ENCODE measurements at regions of chr12 and their contacts with region 1.

Region 1: DNA sequence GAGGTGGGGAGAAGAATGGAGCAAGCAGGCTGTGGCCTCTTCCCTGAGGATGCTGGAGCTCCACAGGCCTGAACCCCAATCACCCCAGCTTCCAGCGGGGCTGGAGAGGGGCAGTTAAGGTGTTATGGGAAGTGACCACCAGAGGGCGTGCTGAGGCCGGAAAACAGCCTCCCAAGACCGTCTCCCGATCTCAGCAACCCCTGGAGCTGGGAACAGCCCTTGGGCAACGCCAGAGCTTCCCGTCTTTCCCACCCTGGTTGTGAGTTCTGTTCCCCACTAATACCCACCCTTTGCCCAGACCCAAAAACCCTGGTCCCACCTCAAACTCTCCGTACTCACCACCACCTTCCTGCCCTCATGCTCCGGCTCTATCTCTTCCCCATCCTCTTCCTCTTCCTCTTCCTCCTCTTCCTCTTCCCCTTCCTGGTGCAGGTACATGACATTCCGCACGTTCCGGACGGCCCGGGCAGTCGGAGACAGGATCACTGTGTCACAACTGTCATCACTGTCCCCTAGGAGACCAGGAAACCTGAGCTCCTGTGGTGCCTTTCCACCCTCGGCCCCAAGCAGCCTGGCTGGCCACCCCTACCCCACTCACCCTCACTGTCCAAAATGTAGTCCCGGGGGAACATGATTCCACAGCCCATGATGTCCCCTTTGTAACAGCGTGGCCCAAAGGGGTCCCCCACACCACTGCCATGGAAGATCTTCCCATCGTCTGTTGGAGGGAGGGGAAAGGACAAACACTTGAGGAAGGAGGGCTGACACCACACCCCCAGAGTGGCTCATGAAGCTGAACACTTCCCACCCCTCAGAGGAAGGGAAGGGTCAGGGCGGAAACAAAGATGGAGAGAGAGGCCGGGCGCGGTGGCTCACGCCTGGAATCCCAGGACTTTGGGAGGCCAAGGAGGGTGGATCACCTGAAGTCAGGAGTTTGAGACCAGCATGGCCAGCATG is 12.9 kb downstream of the SPRYD3 start:
- DNase-seq: no peak
- H3K4me3 ChIP-seq: no peak overlapping the region
- H3K27ac ChIP-seq: peak overlapping the region; percentile 39
- H3K27me3 ChIP-seq: no peaks in the 10 kb centered on the region
- CTCF ChIP-seq: peak; percentile 88

Region 2: GRCh38 chr12:52681526-52682380 is 384.5 kb before region 1 on chr12:
- CTCF ChIA-PET with region 1: no interaction called
- POLR2A ChIA-PET with region 1: no interaction called
- DNase-seq: no peak
- H3K4me3 ChIP-seq: no peak overlapping the region
- H3K27ac ChIP-seq: no peak overlapping the region
- H3K27me3 ChIP-seq: peaks cover 13% of the 10 kb centered on the region
- CTCF ChIP-seq: no peak

Region 3: DNA sequence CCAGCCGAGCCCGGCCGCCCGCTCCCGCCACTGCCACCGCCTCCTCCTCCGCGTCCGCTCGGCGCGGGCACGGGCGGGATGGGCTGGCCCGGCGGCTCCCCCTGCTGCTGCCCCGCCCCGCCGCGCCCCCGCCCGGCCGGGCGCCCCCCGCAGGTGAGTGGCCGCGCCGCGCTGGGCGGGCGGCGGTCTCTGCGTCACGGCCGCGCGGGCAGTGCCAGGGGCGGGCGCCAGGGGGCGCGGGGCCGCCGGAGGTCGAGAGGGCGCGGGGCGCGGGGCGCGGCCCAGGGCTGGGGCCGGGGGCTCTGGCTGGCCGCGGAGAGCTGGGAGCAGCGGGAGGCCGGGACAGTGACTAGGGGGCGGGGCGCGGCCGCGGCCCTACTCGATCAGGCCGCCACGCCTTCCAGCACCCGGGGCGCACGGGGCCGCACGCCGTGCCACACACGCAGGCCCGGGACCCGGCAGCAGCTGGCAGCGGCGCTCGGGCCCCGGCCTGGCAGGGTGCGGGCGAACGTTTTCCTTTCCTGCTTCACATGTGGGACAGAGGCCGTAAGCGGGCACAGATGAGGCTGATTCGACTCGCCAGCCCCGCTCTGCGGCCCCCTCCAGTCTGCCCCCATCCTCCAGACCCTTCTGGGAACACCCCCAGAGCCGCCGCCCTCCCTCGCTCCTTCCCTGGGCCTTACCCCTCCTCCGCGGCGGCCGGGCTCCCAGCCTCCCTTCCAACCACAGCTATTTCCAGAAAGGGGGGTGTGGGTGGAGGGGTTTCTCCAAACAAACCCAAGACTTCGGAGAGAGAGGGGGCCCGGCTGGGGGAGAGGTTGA is 18.8 kb before region 1 on chr12:
- CTCF ChIA-PET with region 1: interaction called, 43 read pairs
- POLR2A ChIA-PET with region 1: interaction called, 14 read pairs
- DNase-seq: no peak
- H3K4me3 ChIP-seq: peak overlapping the region; percentile 86
- H3K27ac ChIP-seq: peak overlapping the region; percentile 94
- H3K27me3 ChIP-seq: no peaks in the 10 kb centered on the region
- CTCF ChIP-seq: no peak

Region 4: GRCh38 chr12:53054112-53054833 is 12.0 kb before region 1 on chr12:
- CTCF ChIA-PET with region 1: interaction called, 43 read pairs
- POLR2A ChIA-PET with region 1: interaction called, 18 read pairs
- DNase-seq: no peak
- H3K4me3 ChIP-seq: peak overlapping the region; percentile 47
- H3K27ac ChIP-seq: peak overlapping the region; percentile 47
- H3K27me3 ChIP-seq: no peaks in the 10 kb centered on the region
- CTCF ChIP-seq: no peak

Region 5: DNA sequence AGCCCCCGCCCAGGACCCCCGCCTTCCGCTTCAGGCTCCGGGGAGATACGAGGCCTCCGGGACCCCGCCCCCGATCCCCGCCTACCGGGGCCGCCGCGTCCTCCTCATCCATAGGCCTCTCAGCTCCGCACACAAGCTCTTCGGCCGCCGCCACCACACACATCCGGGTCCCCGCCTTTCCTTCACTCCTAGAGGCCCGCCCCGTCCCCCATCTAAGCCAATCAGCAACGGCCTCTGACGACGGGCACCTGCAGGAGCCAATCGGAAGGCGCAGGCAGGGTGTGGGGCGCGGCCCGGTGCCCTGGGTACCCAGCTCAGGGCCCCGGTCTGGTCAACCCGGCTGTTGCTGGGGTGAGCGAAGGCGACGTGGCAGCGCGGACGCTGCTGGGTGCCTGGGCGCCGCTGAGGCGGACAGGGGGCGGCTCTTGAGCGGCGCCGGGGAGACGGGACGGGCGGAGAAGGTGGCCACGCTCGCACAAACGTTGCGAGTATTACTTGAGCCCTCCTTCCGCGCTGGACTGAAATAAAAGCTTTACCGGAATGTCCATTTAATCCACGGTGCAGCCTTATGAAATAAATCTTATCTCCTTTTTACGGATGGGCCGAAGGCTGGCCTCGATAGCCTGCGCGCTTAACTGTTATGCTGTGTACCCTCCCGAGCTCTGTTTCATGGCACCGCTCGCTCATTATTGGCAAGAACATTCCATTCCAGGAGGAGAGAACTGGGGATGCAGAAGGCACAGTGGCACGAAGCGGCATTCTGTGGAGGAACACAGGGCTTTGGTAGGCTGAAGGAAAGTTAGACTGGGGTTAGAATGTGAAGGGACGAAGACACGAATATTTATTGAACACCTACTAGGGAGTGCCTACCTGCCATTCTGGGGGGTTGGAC is 13.2 kb after region 1 on chr12 and contains the start of gene SPRYD3:
- CTCF ChIA-PET with region 1: interaction called, 31 read pairs
- POLR2A ChIA-PET with region 1: interaction called, 33 read pairs
- DNase-seq: peak; percentile 94
- H3K4me3 ChIP-seq: peak within 1 kb of the TSS; percentile 69
- H3K27ac ChIP-seq: peak within 1 kb of the TSS; percentile 97
- H3K27me3 ChIP-seq: no peaks in the 10 kb centered on the region
- CTCF ChIP-seq: no peak
- polyA plus RNA-seq, gene SPRYD3: 15.4 and 17.6 TPM in 2 replicates

Region 6: GRCh38 chr12:53098982-53099651 is 32.9 kb after region 1 on chr12:
- CTCF ChIA-PET with region 1: interaction called, 120 read pairs
- POLR2A ChIA-PET with region 1: interaction called, 48 read pairs
- DNase-seq: peak; percentile 86
- H3K4me3 ChIP-seq: peak overlapping the region; percentile 77
- H3K27ac ChIP-seq: peak overlapping the region; percentile 91
- H3K27me3 ChIP-seq: no peaks in the 10 kb centered on the region
- CTCF ChIP-seq: peak; percentile 99

Region 7: GRCh38 chr12:53180220-53180930 is 114.1 kb after region 1 on chr12 and contains the starts of genes CSAD and ZNF740:
- CTCF ChIA-PET with region 1: interaction called, 26 read pairs
- POLR2A ChIA-PET with region 1: interaction called, 9 read pairs
- DNase-seq: peak; percentile 94
- H3K4me3 ChIP-seq: peak within 1 kb of the TSS; percentile 78
- H3K27ac ChIP-seq: peak within 1 kb of the TSS; percentile 95
- H3K27me3 ChIP-seq: no peaks in the 10 kb centered on the region
- CTCF ChIP-seq: no peak
- polyA plus RNA-seq, gene CSAD: 18.9 and 21.6 TPM in 2 replicates
- polyA plus RNA-seq, gene ZNF740: 20.9 and 21.7 TPM in 2 replicates

Region 8: GRCh38 chr12:53198486-53199110 is 132.3 kb after region 1 on chr12:
- CTCF ChIA-PET with region 1: interaction called, 61 read pairs
- POLR2A ChIA-PET with region 1: interaction called, 7 read pairs
- DNase-seq: no peak
- H3K4me3 ChIP-seq: no peak overlapping the region
- H3K27ac ChIP-seq: no peak overlapping the region
- H3K27me3 ChIP-seq: no peaks in the 10 kb centered on the region
- CTCF ChIP-seq: no peak